ACHN (cell line): ENCODE measurements at regions of chr4 and their contacts with region 1.

Region 1: GRCh38 chr4:157992038-157992705 is 180.7 kb downstream of the GASK1B start:
- DNase-seq: peak; percentile 71

Region 2: GRCh38 chr4:157196050-157196449 is 796.1 kb before region 1 on chr4:
- in situ Hi-C with region 1: no loop called
- DNase-seq: no peak

Region 3: DNA sequence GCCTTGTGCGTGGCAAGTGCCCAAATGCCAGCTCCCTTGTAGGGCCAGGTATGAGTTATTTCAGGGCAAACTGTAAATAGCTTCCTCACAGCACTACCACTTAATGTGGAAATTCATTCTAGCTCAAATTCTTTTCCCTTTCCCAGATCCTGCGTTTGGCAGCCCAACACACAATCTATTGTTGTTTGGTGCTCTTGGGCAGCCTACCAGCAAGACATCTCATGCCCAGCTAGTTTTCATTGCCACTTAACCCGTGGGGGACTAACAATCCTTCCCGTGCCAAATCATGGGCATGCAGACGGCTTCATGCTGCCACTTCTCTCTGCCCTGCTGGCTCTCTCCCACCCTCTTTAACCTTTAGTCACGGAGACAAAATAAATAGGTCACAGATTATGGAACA is 317.5 kb before region 1 on chr4:
- in situ Hi-C with region 1: no loop called
- DNase-seq: no peak

Region 4: GRCh38 chr4:158172261-158173258 is 180.4 kb after region 1 on chr4 and contains the start of gene GASK1B:
- in situ Hi-C with region 1: loop called (anchors 10 kb)
- DNase-seq: peak; percentile 73